PC-9 (cell line): ENCODE measurements at regions of chr12 and their contacts with region 1.

Region 1: DNA sequence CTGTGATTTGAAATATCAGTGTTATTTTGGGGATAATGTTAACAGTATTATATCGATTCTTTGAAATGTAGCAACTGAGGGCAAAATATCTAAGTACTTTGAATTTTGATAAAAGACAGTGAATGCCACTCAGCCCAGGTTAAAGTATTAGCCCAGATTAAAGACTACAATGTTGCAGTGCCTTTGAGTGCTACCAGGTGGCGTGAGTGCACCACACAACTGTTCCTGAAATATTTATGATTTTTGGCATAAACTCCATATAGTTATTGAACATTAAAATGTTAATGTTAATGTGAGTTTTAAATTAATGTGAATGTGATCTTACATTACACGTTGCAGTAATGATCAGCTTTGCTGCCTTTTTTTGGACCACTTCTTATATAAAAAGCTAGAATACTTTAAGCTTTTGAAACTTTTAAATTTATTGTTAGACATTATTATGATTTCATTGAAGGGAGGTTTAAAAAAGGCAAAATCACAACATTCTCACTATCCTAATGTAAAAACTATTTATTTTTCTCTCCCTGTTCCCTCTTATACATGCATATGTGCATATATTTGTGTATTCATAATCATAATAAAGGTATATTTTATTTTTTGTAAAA is 22.5 kb downstream of the MRPS35 start:
- DNase-seq: peak in 1 of 2 experiments; percentile 36
- H3K4me3 ChIP-seq: no peak overlapping the region
- H3K27ac ChIP-seq: no peak overlapping the region
- H3K4me1 ChIP-seq: no peaks in the 10 kb centered on the region
- H3K27me3 ChIP-seq: no peaks in the 10 kb centered on the region
- CTCF ChIP-seq: peak; percentile 95

Region 2: DNA sequence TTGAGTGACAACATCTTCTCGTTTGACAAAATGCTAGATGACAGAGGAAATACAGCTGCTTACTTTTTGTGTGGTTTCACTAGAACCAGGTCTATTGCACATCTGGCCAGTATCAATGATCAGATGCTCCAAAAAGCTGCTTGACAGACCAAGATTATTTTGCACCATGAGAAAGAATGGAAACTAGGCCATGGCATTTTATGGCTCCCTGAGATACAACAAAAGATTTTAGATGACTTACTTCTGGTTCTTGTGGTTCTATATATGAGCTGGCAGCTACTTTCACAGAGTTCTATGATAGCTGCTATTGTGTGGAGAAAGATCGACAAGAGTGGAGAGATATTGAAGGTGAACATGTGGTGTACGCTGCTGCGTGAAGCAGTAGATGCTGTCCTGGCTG is 235.0 kb before region 1 on chr12:
- CTCF ChIA-PET with region 1: no interaction called
- POLR2A ChIA-PET with region 1: no interaction called
- intact Hi-C with region 1: no loop called
- DNase-seq: no peak
- H3K4me3 ChIP-seq: no peak overlapping the region
- H3K27ac ChIP-seq: no peak overlapping the region
- H3K4me1 ChIP-seq: no peaks in the 10 kb centered on the region
- H3K27me3 ChIP-seq: no peaks in the 10 kb centered on the region
- CTCF ChIP-seq: no peak

Region 3: DNA sequence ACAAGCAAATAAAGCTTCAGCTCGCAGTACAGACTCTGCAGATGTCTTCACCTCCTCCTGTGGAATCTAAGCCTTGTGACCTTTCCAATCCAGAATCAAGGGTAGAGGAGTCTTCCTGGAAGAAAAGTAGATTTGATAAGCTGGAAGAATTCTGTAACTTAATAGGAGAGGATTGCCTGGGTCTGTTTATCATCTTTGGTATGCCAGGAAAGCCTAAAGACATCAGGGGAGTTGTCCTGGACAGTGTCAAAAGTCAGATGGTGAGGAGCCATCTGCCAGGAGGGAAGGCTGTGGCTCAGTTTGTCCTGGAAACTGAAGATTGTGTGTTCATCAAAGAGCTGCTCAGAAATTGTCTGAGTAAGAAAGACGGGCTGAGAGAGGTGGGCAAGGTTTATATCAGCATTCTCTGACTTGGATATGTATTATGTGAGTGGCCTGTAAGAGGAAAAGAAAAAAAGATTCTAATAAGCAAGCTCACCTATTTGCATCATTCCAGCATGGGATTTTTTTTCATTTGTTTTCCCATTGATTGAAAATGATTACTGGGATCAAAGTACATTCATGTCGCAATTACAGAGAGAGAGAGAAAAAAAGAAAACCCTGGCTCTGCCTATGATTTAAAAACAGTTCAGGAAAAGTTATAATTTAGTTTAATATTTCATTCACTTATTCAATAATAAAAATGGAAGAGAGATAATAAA is 36.1 kb before region 1 on chr12:
- CTCF ChIA-PET with region 1: interaction called, 10 read pairs
- POLR2A ChIA-PET with region 1: no interaction called
- intact Hi-C with region 1: no loop called
- DNase-seq: no peak
- H3K4me3 ChIP-seq: no peak overlapping the region
- H3K27ac ChIP-seq: no peak overlapping the region
- H3K4me1 ChIP-seq: no peaks in the 10 kb centered on the region
- H3K27me3 ChIP-seq: no peaks in the 10 kb centered on the region
- CTCF ChIP-seq: no peak

Region 4: GRCh38 chr12:27821259-27821973 is 88.3 kb after region 1 on chr12:
- CTCF ChIA-PET with region 1: no interaction called
- POLR2A ChIA-PET with region 1: no interaction called
- intact Hi-C with region 1: loop called (anchors 2 kb)
- DNase-seq: peak; percentile 56 to 70
- H3K4me3 ChIP-seq: peak overlapping the region; percentile 49; the same call in 1 of the 2 replicates
- H3K27ac ChIP-seq: peak overlapping the region; percentile 97
- H3K4me1 ChIP-seq: peaks cover 33% of the 10 kb centered on the region
- H3K27me3 ChIP-seq: no peaks in the 10 kb centered on the region
- CTCF ChIP-seq: peak; percentile 92

Region 5: GRCh38 chr12:27868139-27868538 is 135.0 kb after region 1 on chr12:
- CTCF ChIA-PET with region 1: no interaction called
- POLR2A ChIA-PET with region 1: no interaction called
- intact Hi-C with region 1: no loop called
- DNase-seq: no peak
- H3K4me3 ChIP-seq: no peak overlapping the region
- H3K27ac ChIP-seq: no peak overlapping the region
- H3K4me1 ChIP-seq: no peaks in the 10 kb centered on the region
- H3K27me3 ChIP-seq: no peaks in the 10 kb centered on the region
- CTCF ChIP-seq: no peak

Region 6: GRCh38 chr12:27899151-27899661 is 166.1 kb after region 1 on chr12:
- CTCF ChIA-PET with region 1: no interaction called
- POLR2A ChIA-PET with region 1: no interaction called
- intact Hi-C with region 1: no loop called
- DNase-seq: no peak
- H3K4me3 ChIP-seq: no peak overlapping the region
- H3K27ac ChIP-seq: no peak overlapping the region
- H3K4me1 ChIP-seq: no peaks in the 10 kb centered on the region
- H3K27me3 ChIP-seq: no peaks in the 10 kb centered on the region
- CTCF ChIP-seq: no peak

Region 7: DNA sequence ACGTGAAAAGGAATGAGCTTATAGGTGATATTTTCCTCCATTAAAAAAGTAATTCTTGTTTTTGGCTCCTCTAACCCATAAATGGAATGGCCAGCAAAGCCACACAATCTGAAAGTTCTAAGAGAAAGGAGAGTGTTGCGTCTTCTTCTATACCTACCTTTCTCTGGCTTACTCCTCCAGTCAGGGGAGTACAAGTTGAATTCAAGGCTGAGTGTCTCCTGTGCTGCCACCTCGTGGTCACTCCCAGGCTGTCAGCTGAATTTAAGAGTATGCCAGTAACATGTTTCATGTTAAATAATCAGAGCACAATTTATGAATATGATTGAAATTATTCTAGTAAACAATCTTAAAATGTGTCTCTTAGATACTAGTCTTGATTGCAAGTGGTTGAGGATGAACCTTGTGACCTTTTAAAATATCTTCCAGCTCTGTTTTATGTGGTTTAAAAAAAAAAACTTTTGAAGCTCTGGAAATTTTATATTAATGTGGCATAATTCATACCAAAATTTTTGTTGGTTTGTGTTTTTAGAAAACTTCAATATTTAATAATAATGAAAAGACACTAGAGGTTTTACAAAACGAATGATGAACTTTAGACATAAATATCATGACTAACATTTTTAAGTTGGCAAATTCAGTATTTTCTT is 207.7 kb after region 1 on chr12:
- CTCF ChIA-PET with region 1: interaction called, 3 read pairs
- POLR2A ChIA-PET with region 1: no interaction called
- intact Hi-C with region 1: loop called (anchors 1 kb)
- DNase-seq: peak; percentile 64 to 81
- H3K4me3 ChIP-seq: no peak overlapping the region
- H3K27ac ChIP-seq: no peak overlapping the region
- H3K4me1 ChIP-seq: no peaks in the 10 kb centered on the region
- H3K27me3 ChIP-seq: no peaks in the 10 kb centered on the region
- CTCF ChIP-seq: peak; percentile 87

Region 8: GRCh38 chr12:28327722-28328121 is 594.6 kb after region 1 on chr12:
- CTCF ChIA-PET with region 1: no interaction called
- POLR2A ChIA-PET with region 1: no interaction called
- intact Hi-C with region 1: loop called (anchors 5 kb)
- DNase-seq: no peak
- H3K4me3 ChIP-seq: no peak overlapping the region
- H3K27ac ChIP-seq: no peak overlapping the region
- H3K4me1 ChIP-seq: no peaks in the 10 kb centered on the region
- H3K27me3 ChIP-seq: no peaks in the 10 kb centered on the region
- CTCF ChIP-seq: no peak

Region 9: DNA sequence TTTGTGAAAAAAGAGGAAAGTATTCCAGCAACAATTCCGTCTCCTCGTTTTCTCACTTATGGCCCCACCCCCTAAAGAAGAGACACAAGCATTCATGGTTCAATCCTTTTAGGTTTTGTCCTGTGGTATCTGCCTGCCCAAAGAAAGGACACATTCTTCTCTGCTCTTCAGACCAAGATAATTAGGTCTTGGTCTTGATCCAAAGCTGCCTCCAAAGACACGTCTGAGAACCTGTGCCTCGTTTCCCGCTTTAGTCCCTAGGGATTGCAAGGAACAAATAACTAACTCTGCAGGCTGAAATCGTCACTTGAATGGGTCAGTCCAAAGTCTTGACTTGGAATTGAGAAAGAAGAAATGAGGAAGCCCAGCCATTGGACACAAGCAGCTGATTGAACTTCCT is 1213.2 kb after region 1 on chr12:
- CTCF ChIA-PET with region 1: interaction called, 13 read pairs
- POLR2A ChIA-PET with region 1: no interaction called
- intact Hi-C with region 1: no loop called
- DNase-seq: no peak
- H3K4me3 ChIP-seq: no peak overlapping the region
- H3K27ac ChIP-seq: no peak overlapping the region
- H3K4me1 ChIP-seq: no peaks in the 10 kb centered on the region
- H3K27me3 ChIP-seq: no peaks in the 10 kb centered on the region
- CTCF ChIP-seq: no peak

Region 10: GRCh38 chr12:29035112-29035511 is 1302.0 kb after region 1 on chr12:
- CTCF ChIA-PET with region 1: no interaction called
- POLR2A ChIA-PET with region 1: interaction called, 14 read pairs
- intact Hi-C with region 1: no loop called
- DNase-seq: no peak
- H3K4me3 ChIP-seq: no peak overlapping the region
- H3K27ac ChIP-seq: no peak overlapping the region
- H3K4me1 ChIP-seq: no peaks in the 10 kb centered on the region
- H3K27me3 ChIP-seq: no peaks in the 10 kb centered on the region
- CTCF ChIP-seq: no peak